ENCODE measurements at regions of chr11 and their contacts with region 1.

Region 1: DNA sequence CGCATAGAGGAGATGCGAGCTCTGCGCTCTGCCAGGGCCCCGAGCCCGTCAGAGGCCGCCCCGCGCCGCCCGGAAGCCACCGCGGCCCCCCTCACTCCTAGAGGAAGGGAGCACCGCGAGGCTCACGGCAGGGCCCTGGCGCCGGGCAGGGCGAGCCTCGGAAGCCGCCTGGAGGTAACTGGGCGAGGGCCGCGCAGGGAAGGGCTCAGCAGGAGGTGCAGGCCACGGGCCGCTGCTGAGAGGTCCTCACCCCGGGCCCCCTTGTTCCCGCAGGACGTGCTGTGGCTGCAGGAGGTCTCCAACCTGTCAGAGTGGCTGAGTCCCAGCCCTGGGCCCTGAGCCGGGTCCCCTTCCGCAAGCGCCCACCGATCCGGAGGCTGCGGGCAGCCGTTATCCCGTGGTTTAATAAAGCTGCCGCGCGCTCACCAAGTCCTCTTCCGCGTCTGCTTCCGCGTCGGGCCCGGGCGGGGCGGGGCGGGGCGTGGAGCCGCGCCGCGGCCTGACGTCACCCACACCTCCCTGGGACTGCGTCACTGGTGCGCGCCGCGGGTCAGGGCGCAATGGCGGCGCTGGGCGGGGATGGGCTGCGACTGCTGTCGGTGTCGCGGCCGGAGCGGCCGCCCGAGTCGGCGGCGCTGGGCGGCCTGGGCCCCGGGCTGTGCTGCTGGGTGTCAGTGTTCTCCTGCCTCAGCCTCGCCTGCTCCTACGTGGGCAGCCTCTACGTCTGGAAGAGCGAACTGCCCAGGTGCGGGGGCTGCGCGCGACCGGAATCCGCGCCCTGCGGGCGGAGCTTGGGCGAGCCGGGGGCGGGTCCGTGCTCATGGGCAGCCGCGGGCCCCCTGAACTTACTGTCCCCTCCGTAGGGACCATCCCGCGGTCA is at the start of gene RCE1:
- DNase-seq: peak; percentile 85 to 93 (median 90)
- H3K4me3 ChIP-seq: peak within 1 kb of the TSS; percentile 88 to 96
- H3K4me3 Mint-ChIP-seq: peak within 1 kb of the TSS; percentile 87 to 96 (median 93)
- H3K27ac ChIP-seq: peak within 1 kb of the TSS; percentile 97
- H3K27ac Mint-ChIP-seq: peak within 1 kb of the TSS; percentile 91 to 98 (median 96)
- H3K4me1 ChIP-seq: peaks cover 50% of the 10 kb centered on the region
- H3K4me1 Mint-ChIP-seq: peaks cover 33 to 55% (median 44%) of the 10 kb centered on the region in 4 donors
- H3K27me3 ChIP-seq: no peaks in the 10 kb centered on the region
- H3K27me3 Mint-ChIP-seq: no peaks in the 10 kb centered on the region
- total RNA-seq, gene RCE1: 30.0 to 34.5 TPM

Region 2: GRCh38 chr11:66344550-66345315 is 498.4 kb before region 1 on chr11 and contains the start of gene BRMS1:
- CTCF ChIA-PET with region 1: no interaction called
- POLR2A ChIA-PET with region 1: interaction called, 12 read pairs
- intact Hi-C with region 1: loop called (anchors 1 kb)
- DNase-seq: peak; percentile 92 to 99 (median 93)
- H3K4me3 ChIP-seq: peak within 1 kb of the TSS; percentile 79 to 99
- H3K4me3 Mint-ChIP-seq: peak within 1 kb of the TSS; percentile 90 to 99 (median 97)
- H3K27ac ChIP-seq: peak within 1 kb of the TSS; percentile 84
- H3K27ac Mint-ChIP-seq: peak within 1 kb of the TSS; percentile 95 to 99 (median 98)
- H3K4me1 ChIP-seq: peaks cover 45% of the 10 kb centered on the region
- H3K4me1 Mint-ChIP-seq: peaks cover 31 to 62% (median 41%) of the 10 kb centered on the region in 4 donors
- H3K27me3 ChIP-seq: no peaks in the 10 kb centered on the region
- H3K27me3 Mint-ChIP-seq: peaks cover 1 to 4% of the 10 kb centered on the region in 2 donors
- total RNA-seq, gene BRMS1: 49.8 to 50.8 TPM

Region 3: DNA sequence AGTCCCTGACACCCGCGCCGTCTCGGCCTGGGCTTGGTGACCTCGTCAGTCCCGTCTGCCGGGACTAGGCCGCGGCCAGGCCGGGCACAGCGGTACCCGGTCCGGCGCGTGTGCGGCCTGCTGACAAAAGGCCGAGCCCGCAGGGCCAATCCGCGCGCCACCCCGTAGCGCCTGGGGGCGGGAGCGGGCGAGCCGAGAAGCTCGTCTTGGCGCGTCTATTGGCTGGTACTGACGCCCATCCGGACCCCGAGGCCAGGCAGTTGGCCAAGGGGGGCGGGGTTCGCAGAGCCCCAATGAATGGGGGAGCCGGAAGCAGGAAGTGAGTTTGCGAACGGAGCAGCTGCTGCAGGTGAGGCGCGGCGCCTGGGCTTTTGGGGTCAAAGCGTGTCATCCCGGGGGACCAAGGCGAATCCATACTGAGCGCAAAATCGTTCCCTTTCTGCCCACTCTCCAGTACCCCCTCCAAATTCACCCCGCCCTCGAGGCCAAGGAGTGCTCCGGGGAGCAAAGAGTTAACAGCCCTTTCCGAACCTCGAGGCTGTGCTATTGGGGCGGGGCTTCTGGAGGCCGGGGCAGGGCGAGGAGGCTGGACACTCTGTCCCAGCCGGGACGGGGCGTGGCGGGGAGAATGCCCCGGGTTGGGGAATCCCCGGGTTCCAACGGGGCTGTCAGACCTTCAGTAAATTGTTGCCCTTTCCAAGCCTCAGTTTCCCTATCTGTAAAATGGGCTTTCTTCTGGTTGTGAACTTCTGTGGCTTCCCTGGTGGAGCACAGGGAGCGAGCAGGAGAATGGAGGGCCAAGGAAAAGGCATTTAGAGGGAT is 362.8 kb before region 1 on chr11 and contains the start of gene DPP3:
- CTCF ChIA-PET with region 1: no interaction called
- POLR2A ChIA-PET with region 1: interaction called, 15 read pairs
- intact Hi-C with region 1: no loop called
- DNase-seq: peak; percentile 94 to 96 (median 96)
- H3K4me3 ChIP-seq: peak within 1 kb of the TSS; percentile 88 to 90
- H3K4me3 Mint-ChIP-seq: peak within 1 kb of the TSS; percentile 87 to 96 (median 90)
- H3K27ac ChIP-seq: peak within 1 kb of the TSS; percentile 81
- H3K27ac Mint-ChIP-seq: peak within 1 kb of the TSS; percentile 78 to 94 (median 91)
- H3K4me1 ChIP-seq: peaks cover 20% of the 10 kb centered on the region
- H3K4me1 Mint-ChIP-seq: peaks cover 13 to 48% (median 21%) of the 10 kb centered on the region in 4 donors
- H3K27me3 ChIP-seq: no peaks in the 10 kb centered on the region
- H3K27me3 Mint-ChIP-seq: no peaks in the 10 kb centered on the region
- total RNA-seq, gene DPP3: 21.0 to 24.0 TPM

Region 4: GRCh38 chr11:66638177-66639065 is 204.7 kb before region 1 on chr11 and contains the start of gene RBM4:
- CTCF ChIA-PET with region 1: no interaction called
- POLR2A ChIA-PET with region 1: interaction called, 13 read pairs
- intact Hi-C with region 1: no loop called
- DNase-seq: peak; percentile 95 to 99 (median 98)
- H3K4me3 ChIP-seq: peak within 1 kb of the TSS; percentile 63 to 96
- H3K4me3 Mint-ChIP-seq: peak within 1 kb of the TSS; percentile 97 to 99 (median 98)
- H3K27ac ChIP-seq: peak within 1 kb of the TSS; percentile 88
- H3K27ac Mint-ChIP-seq: peak within 1 kb of the TSS; percentile 94 to 99 (median 99)
- H3K4me1 ChIP-seq: peaks cover 49% of the 10 kb centered on the region
- H3K4me1 Mint-ChIP-seq: peaks cover 48 to 81% (median 59%) of the 10 kb centered on the region in 4 donors
- H3K27me3 ChIP-seq: no peaks in the 10 kb centered on the region
- H3K27me3 Mint-ChIP-seq: no peaks in the 10 kb centered on the region
- total RNA-seq, gene RBM4: 183 to 189 TPM

Region 5: DNA sequence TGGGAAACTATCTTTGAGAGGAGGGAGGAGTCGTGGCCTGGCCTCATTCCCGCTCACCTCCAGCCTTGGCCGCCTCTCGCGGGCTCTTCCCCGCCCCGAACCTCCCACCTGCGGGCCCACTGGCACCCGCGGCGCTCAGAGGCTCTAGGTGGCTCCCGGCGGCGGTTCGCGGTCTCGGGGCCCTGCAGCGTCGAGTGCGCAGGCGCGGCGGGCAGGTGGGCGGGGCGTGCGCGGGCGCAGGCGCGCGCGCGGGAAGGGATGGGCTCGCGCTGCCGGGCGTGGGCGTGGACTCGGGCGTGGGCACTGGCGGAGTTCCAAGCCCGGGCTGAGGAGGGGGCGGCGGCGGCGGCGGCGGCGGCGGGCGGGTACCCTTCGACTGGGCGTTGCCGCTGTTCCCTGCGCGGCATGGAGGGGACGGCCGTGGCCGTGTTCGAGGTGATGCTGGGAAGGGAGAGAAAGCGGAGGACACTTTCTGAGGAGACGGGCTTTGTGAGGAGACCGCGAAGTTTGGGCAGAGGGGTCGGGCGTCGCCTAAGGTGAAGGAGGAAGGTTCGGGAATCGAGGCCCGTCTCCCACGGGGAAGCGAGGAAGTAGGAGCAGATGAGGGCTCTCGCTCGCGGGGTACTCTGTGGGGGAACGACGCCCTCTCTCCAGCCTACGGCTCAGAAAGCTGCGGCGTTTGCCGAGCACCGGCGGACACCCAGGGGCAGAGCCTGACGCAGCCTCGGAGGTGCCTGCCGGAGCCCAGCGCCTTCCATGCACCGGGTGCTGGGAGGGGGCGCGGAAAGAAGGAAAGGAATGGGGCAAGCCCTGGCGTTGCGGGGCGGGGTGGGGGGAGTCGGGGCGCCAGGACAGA is 98.4 kb before region 1 on chr11:
- CTCF ChIA-PET with region 1: no interaction called
- POLR2A ChIA-PET with region 1: interaction called, 6 read pairs
- intact Hi-C with region 1: loop called (anchors 1 kb)
- DNase-seq: peak; percentile 87 to 94 (median 91)
- H3K4me3 ChIP-seq: peak overlapping the region; percentile 76 to 78
- H3K4me3 Mint-ChIP-seq: peak overlapping the region; percentile 87 to 97 (median 94)
- H3K27ac ChIP-seq: peak overlapping the region; percentile 66
- H3K27ac Mint-ChIP-seq: peak overlapping the region; percentile 74 to 96 (median 89)
- H3K4me1 ChIP-seq: peaks cover 10% of the 10 kb centered on the region
- H3K4me1 Mint-ChIP-seq: peaks cover 2 to 13% (median 7%) of the 10 kb centered on the region in 4 donors
- H3K27me3 ChIP-seq: no peaks in the 10 kb centered on the region
- H3K27me3 Mint-ChIP-seq: no peaks in the 10 kb centered on the region

Region 6: GRCh38 chr11:66883016-66883968 is 40.2 kb after region 1 on chr11:
- CTCF ChIA-PET with region 1: no interaction called
- POLR2A ChIA-PET with region 1: interaction called, 12 read pairs
- intact Hi-C with region 1: no loop called
- DNase-seq: peak in 4 of 5 donors; percentile 36 to 42 (median 37)
- H3K4me3 ChIP-seq: no peak overlapping the region
- H3K4me3 Mint-ChIP-seq: peak overlapping the region in 1 of 8 donors; percentile 26
- H3K27ac ChIP-seq: no peak overlapping the region
- H3K27ac Mint-ChIP-seq: peak overlapping the region in 1 of 7 donors; percentile 8
- H3K4me1 ChIP-seq: peaks cover 14% of the 10 kb centered on the region
- H3K4me1 Mint-ChIP-seq: peaks cover 10 to 25% (median 13%) of the 10 kb centered on the region in 4 donors
- H3K27me3 ChIP-seq: no peaks in the 10 kb centered on the region
- H3K27me3 Mint-ChIP-seq: no peaks in the 10 kb centered on the region

Region 7: GRCh38 chr11:66894141-66894540 is 51.0 kb after region 1 on chr11:
- CTCF ChIA-PET with region 1: no interaction called
- POLR2A ChIA-PET with region 1: no interaction called
- intact Hi-C with region 1: no loop called
- DNase-seq: no peak
- H3K4me3 ChIP-seq: no peak overlapping the region
- H3K4me3 Mint-ChIP-seq: no peak overlapping the region
- H3K27ac ChIP-seq: no peak overlapping the region
- H3K27ac Mint-ChIP-seq: no peak overlapping the region
- H3K4me1 ChIP-seq: no peaks in the 10 kb centered on the region
- H3K4me1 Mint-ChIP-seq: no peaks in the 10 kb centered on the region
- H3K27me3 ChIP-seq: no peaks in the 10 kb centered on the region
- H3K27me3 Mint-ChIP-seq: peaks cover 2 to 4% of the 10 kb centered on the region in 2 donors

Measured in CD4-positive, alpha-beta memory T cell (primary cell).